MCF 10A (cell line): ENCODE measurements at regions of chr9 and their contacts with region 1.

Region 1: DNA sequence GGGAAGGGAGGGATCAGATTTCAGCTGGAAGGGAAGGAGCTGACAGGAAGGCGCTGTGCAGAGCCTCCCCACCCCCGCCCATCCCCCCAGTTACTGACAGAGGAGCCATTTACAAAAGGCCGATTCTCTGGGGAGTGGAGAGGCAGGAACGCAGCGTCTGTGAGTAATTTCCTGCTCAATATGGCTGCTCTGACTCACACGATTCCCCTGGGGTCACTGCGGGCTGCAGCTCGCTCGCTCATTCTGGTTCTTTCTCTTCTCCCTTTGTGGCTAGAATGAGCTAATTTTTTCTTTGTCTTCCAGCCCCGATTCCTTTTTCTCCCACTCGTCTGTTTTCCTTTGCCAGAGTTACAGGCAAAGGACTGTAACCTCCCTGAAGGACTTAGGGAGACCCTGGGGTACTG is 28.8 kb downstream of the PTPA start:
- DNase-seq: peak; percentile 99
- H3K4me3 Mint-ChIP-seq: peak overlapping the region; percentile 74
- H3K27ac Mint-ChIP-seq: peak overlapping the region; percentile 97
- H3K4me1 Mint-ChIP-seq: peaks cover 30% of the 10 kb centered on the region
- H3K27me3 Mint-ChIP-seq: no peaks in the 10 kb centered on the region
- CTCF ChIP-seq: no peak

Region 2: GRCh38 chr9:128001151-128001778 is 1138.7 kb before region 1 on chr9:
- CTCF ChIA-PET with region 1: no interaction called
- POLR2A ChIA-PET with region 1: no interaction called
- intact Hi-C with region 1: no loop called
- DNase-seq: no peak
- H3K4me3 Mint-ChIP-seq: no peak overlapping the region
- H3K27ac Mint-ChIP-seq: peak overlapping the region; percentile 67
- H3K4me1 Mint-ChIP-seq: peaks cover 7% of the 10 kb centered on the region
- H3K27me3 Mint-ChIP-seq: no peaks in the 10 kb centered on the region
- CTCF ChIP-seq: no peak

Region 3: GRCh38 chr9:129150672-129151211 is 10.7 kb after region 1 on chr9:
- CTCF ChIA-PET with region 1: interaction called, 22 read pairs
- POLR2A ChIA-PET with region 1: no interaction called
- intact Hi-C with region 1: no loop called
- DNase-seq: no peak
- H3K4me3 Mint-ChIP-seq: no peak overlapping the region
- H3K27ac Mint-ChIP-seq: no peak overlapping the region
- H3K4me1 Mint-ChIP-seq: no peaks in the 10 kb centered on the region
- H3K27me3 Mint-ChIP-seq: no peaks in the 10 kb centered on the region
- CTCF ChIP-seq: no peak

Region 4: DNA sequence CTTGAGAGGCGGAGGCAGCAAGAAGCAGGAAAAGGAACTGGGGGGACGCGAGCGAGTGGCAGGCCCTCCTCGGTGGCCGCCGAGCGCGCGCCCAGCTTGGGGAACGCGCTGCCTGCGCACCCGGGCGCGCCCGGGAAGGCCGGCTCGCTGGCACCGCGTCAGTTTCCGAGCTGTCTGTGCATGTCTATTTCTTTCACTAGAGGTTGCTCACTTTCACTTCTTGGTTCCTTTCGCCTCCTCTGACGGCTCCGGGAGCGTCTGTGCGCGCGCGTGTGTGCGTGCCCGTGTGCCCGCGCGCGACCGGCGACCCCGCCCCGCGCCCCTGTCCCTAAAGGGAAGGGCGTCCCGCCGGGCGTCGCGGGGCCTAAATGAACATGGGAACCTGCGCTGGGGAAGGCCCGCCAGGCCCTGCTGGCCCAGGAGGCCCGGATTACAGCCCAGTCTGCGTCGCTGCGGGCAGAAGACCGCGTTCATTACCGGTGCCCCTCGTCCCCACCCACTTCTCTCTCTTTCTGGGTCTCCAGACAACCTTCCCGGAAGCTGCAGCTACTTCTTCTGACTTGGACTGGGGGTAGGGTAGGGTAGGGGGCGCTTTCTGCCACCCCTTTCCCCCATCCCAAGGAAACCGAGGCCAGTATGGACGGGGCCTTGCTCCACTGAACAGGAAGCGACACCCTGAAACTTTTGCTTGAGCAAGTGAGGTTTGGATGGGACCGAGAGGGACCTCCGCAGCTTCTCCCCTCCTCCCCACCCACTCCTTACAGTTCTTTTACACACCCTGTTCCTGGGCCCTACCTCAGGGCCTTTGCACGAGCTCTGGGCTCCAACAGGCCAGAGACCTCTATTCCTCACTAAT is 243.8 kb after region 1 on chr9:
- CTCF ChIA-PET with region 1: interaction called, 3 read pairs
- POLR2A ChIA-PET with region 1: interaction called, 11 read pairs
- intact Hi-C with region 1: no loop called
- DNase-seq: peak; percentile 52
- H3K4me3 Mint-ChIP-seq: peak overlapping the region; percentile 53
- H3K27ac Mint-ChIP-seq: no peak overlapping the region
- H3K4me1 Mint-ChIP-seq: peaks cover 6% of the 10 kb centered on the region
- H3K27me3 Mint-ChIP-seq: no peaks in the 10 kb centered on the region
- CTCF ChIP-seq: no peak

Region 5: GRCh38 chr9:129495534-129496325 is 355.7 kb after region 1 on chr9:
- CTCF ChIA-PET with region 1: interaction called, 9 read pairs
- POLR2A ChIA-PET with region 1: interaction called, 7 read pairs
- intact Hi-C with region 1: loop called (anchors 1 kb)
- DNase-seq: peak; percentile 91
- H3K4me3 Mint-ChIP-seq: peak overlapping the region; percentile 76
- H3K27ac Mint-ChIP-seq: peak overlapping the region; percentile 66
- H3K4me1 Mint-ChIP-seq: peaks cover 49% of the 10 kb centered on the region
- H3K27me3 Mint-ChIP-seq: no peaks in the 10 kb centered on the region
- CTCF ChIP-seq: no peak

Region 6: GRCh38 chr9:129626079-129626624 is 486.2 kb after region 1 on chr9 and contains the start of gene NTMT1:
- CTCF ChIA-PET with region 1: interaction called, 96 read pairs
- POLR2A ChIA-PET with region 1: interaction called, 65 read pairs
- intact Hi-C with region 1: no loop called
- DNase-seq: peak; percentile 82
- H3K4me3 Mint-ChIP-seq: peak within 1 kb of the TSS; percentile 92
- H3K27ac Mint-ChIP-seq: peak within 1 kb of the TSS; percentile 72
- H3K4me1 Mint-ChIP-seq: peaks cover 33% of the 10 kb centered on the region
- H3K27me3 Mint-ChIP-seq: no peaks in the 10 kb centered on the region
- CTCF ChIP-seq: no peak
- total RNA-seq, gene NTMT1: 32.9 and 49.2 TPM in 2 replicates